ENCODE measurements at regions of chr15 and their contacts with region 1.

Region 1: GRCh38 chr15:58933281-58934113 is at the start of gene SLTM:
- DNase-seq: peak; percentile 97
- total RNA-seq, gene SLTM: 60.9 TPM

Region 2: GRCh38 chr15:58770857-58771620 is 162.5 kb before region 1 on chr15 and contains the start of gene MINDY2:
- intact Hi-C with region 1: loop called (anchors 2 kb)
- DNase-seq: peak; percentile 99
- total RNA-seq, gene MINDY2: 33.4 TPM